ENCODE measurements at regions of chr6 and their contacts with region 1.

Region 1: DNA sequence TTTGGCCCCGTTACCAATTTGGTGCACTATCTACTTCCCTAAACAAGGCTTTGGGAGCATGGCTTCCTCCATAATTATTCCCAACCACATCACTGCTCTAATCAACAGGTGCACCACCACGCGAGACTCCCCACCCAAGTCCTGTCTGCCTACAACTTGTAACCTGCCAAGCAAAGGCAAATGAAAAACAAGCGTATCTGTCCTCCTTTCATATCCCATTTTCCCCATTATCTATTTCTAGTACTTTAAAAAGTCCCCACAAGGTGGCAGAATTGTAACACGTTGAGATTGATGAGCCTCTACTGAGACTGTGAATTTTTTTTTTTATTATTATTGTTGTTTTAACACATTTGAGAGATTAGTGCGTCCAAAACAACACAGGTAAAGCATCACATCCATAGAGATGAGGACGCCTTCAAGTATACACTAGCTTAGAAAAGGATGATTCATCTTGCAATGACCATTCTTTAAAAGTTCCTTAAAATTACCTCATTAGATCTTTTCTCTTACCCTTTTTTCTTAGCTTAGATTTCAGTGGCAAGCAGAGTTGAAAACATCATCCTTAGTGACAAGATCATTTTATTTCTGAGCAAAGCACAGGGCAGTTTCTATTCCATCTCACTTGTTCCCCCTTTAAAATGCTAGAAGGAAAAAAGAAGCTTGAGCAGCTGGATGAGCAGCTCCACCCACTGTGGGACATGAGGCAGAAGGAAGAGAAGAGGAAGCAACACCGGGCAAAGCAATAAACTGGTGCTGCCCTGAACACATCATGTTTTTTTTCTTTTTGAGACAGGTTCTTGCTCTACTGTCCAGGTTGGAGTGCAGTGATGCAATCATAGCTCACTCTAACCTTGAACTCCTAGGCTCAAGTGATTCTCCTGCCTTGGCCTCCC is 210.8 kb downstream of the ARHGAP18 start:
- DNase-seq: peak; percentile 82
- H3K4me3 Mint-ChIP-seq: peak overlapping the region; percentile 56
- H3K27ac Mint-ChIP-seq: peak overlapping the region; percentile 73
- H3K4me1 Mint-ChIP-seq: peaks cover 36% of the 10 kb centered on the region
- H3K27me3 Mint-ChIP-seq: no peaks in the 10 kb centered on the region
- CTCF ChIP-seq: peak; percentile 63

Region 2: GRCh38 chr6:128807577-128807976 is 691.6 kb before region 1 on chr6:
- CTCF ChIA-PET with region 1: no interaction called
- POLR2A ChIA-PET with region 1: no interaction called
- intact Hi-C with region 1: loop called (anchors 5 kb)
- DNase-seq: peak; percentile 37
- H3K4me3 Mint-ChIP-seq: no peak overlapping the region
- H3K27ac Mint-ChIP-seq: no peak overlapping the region
- H3K4me1 Mint-ChIP-seq: no peaks in the 10 kb centered on the region
- H3K27me3 Mint-ChIP-seq: peaks cover 54% of the 10 kb centered on the region
- CTCF ChIP-seq: peak; percentile 49

Region 3: GRCh38 chr6:129267028-129267427 is 232.2 kb before region 1 on chr6:
- CTCF ChIA-PET with region 1: no interaction called
- POLR2A ChIA-PET with region 1: no interaction called
- intact Hi-C with region 1: no loop called
- DNase-seq: no peak
- H3K4me3 Mint-ChIP-seq: no peak overlapping the region
- H3K27ac Mint-ChIP-seq: no peak overlapping the region
- H3K4me1 Mint-ChIP-seq: no peaks in the 10 kb centered on the region
- H3K27me3 Mint-ChIP-seq: no peaks in the 10 kb centered on the region
- CTCF ChIP-seq: no peak

Region 4: DNA sequence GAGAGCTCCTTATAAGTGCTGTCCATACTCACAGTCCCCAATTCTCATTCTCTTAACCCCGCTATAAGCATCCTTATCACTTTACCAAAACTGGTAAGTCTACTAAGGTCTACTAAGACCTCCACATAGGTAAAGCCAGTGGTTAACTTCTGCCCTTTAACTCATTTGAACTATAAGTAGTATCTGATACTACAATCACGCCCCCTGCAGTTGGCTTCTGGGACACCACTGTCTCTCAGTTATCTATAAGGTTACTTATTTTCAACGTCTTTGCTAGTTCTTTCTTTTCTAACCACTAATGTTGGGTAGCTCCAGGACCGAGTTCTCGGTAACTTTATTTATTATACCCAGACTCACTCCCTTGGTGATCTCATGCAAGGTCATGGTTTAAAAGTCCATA is 68.2 kb after region 1 on chr6:
- CTCF ChIA-PET with region 1: interaction called, 111 read pairs
- POLR2A ChIA-PET with region 1: interaction called, 5 read pairs
- intact Hi-C with region 1: loop called (anchors 1 kb)
- DNase-seq: peak; percentile 56
- H3K4me3 Mint-ChIP-seq: no peak overlapping the region
- H3K27ac Mint-ChIP-seq: no peak overlapping the region
- H3K4me1 Mint-ChIP-seq: no peaks in the 10 kb centered on the region
- H3K27me3 Mint-ChIP-seq: no peaks in the 10 kb centered on the region
- CTCF ChIP-seq: peak; percentile 35

Region 5: GRCh38 chr6:129590408-129591022 is 91.3 kb after region 1 on chr6:
- CTCF ChIA-PET with region 1: interaction called, 12 read pairs
- POLR2A ChIA-PET with region 1: interaction called, 3 read pairs
- intact Hi-C with region 1: no loop called
- DNase-seq: peak; percentile 55
- H3K4me3 Mint-ChIP-seq: no peak overlapping the region
- H3K27ac Mint-ChIP-seq: no peak overlapping the region
- H3K4me1 Mint-ChIP-seq: no peaks in the 10 kb centered on the region
- H3K27me3 Mint-ChIP-seq: no peaks in the 10 kb centered on the region
- CTCF ChIP-seq: no peak

Region 6: DNA sequence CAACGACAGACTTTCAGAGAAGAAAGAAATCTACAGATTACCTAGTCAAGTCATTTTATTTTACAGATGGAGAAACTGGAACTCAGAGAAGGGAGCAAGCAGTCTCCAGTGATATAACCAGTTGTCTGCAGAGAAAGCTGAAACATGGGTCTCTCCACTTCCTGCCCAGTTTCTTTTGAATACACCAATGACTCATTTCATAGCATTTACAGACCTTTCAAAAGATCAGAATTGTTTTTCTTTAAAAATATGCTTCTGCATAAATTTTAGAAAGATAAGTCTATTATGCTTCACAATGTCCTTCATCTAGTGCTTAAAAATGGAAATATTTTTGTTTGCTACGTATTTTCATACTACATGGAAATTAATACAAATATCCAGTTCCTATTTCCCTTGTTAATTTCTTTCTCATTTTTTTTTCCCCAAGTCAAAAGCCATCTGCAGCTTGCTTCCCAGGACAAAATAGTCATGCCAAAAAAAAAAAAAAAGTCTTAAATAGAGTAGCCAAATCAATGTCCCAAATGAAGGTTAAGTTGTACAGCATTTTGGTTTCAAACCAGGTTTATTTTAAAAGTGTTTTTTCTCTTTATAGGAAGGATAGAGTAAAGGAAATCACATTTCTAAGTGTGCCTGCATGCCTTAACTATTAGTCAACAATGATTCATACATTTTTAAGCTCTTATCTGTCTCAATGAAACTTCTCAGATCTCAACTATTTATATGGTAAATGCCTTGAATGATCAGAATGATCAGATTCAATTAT is 173.9 kb after region 1 on chr6:
- CTCF ChIA-PET with region 1: no interaction called
- POLR2A ChIA-PET with region 1: no interaction called
- intact Hi-C with region 1: loop called (anchors 10 kb)
- DNase-seq: peak; percentile 63
- H3K4me3 Mint-ChIP-seq: peak overlapping the region; percentile 14
- H3K27ac Mint-ChIP-seq: peak overlapping the region; percentile 90
- H3K4me1 Mint-ChIP-seq: peaks cover 45% of the 10 kb centered on the region
- H3K27me3 Mint-ChIP-seq: no peaks in the 10 kb centered on the region
- CTCF ChIP-seq: no peak

Region 7: DNA sequence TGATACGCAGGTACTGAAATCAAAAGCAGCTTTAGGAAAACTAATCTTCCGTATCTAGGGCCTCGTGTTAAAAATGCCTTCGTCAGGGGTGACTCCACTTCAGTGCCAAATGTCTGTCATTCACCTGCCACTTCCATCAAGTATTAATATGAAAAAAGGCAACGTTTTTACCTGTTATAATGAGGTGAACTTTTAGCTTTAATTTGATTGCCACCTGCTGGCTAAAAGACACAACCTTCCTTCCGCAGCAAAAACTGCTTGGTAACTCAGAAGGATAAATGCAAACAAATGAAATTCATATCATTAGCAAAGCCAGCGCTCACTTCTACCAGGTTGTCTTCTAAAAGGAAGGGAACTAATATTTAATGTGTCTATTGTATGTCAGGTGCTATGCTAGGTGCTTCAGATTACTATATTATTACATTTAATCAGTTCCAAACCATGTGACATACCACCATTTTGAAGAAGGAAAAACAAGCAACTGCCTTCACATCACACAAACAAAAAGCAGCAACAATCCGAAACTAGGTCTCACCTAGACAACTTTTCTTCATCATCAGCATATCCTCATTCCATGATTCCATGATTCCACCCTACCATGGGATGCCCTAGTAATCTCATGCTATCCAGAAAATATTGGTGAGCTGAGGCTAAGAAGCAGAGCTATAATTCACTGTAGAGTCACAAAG is 231.4 kb after region 1 on chr6:
- CTCF ChIA-PET with region 1: interaction called, 12 read pairs
- POLR2A ChIA-PET with region 1: no interaction called
- intact Hi-C with region 1: loop called (anchors 2 kb)
- DNase-seq: peak; percentile 61
- H3K4me3 Mint-ChIP-seq: no peak overlapping the region
- H3K27ac Mint-ChIP-seq: no peak overlapping the region
- H3K4me1 Mint-ChIP-seq: peaks cover 22% of the 10 kb centered on the region
- H3K27me3 Mint-ChIP-seq: no peaks in the 10 kb centered on the region
- CTCF ChIP-seq: peak; percentile 56

Region 8: DNA sequence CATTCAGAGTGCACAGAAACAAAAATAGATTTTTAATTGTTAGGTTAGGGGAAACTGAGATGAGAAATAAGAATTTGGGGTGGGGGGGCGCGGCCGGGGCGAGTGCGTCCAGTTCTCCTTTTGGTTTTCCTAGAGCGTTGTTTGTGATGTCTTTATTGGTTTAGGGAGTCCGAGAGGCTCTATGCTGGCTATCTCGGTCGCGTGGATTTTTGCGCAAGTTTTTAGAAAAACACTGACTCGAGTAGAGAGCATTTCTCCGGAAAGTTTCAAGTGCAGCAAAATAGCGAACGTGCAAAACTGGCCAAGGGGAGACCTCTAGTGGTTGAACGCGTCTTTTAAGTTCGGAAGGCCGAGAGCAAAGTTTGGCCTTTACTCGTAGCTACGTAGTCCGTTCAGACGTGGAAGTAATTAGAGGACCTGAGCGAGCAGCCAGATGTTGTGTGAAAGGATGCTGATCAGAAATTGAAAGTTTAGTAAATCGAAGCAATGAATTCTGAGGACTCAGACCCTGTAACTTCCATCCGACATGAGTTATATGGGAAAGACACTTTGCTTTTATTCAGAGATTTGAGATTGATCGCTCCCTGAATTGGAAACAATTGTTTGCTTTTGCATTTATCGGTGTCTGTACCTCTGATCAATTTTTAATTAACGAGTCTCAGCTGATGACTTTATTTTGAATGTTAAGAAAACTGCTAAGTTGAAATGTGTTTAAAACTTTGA is 521.9 kb after region 1 on chr6:
- CTCF ChIA-PET with region 1: interaction called, 7 read pairs
- POLR2A ChIA-PET with region 1: interaction called, 9 read pairs
- intact Hi-C with region 1: loop called (anchors 2 kb)
- DNase-seq: peak; percentile 91
- H3K4me3 Mint-ChIP-seq: peak overlapping the region; percentile 94
- H3K27ac Mint-ChIP-seq: peak overlapping the region; percentile 75
- H3K4me1 Mint-ChIP-seq: no peaks in the 10 kb centered on the region
- H3K27me3 Mint-ChIP-seq: no peaks in the 10 kb centered on the region
- CTCF ChIP-seq: peak; percentile 69